ENCODE measurements at regions of chr10 and their contacts with region 1.

Region 1: GRCh38 chr10:111885046-111885445 is 298.5 kb downstream of the GPAM start:
- DNase-seq: no peak
- H3K4me3 ChIP-seq: no peak overlapping the region
- H3K27ac ChIP-seq: no peak overlapping the region
- H3K4me1 ChIP-seq: no peaks in the 10 kb centered on the region
- H3K27me3 ChIP-seq: no peaks in the 10 kb centered on the region
- CTCF ChIP-seq: no peak
- EP300 ChIP-seq: no peak
- POLR2A ChIP-seq: no peak

Region 2: DNA sequence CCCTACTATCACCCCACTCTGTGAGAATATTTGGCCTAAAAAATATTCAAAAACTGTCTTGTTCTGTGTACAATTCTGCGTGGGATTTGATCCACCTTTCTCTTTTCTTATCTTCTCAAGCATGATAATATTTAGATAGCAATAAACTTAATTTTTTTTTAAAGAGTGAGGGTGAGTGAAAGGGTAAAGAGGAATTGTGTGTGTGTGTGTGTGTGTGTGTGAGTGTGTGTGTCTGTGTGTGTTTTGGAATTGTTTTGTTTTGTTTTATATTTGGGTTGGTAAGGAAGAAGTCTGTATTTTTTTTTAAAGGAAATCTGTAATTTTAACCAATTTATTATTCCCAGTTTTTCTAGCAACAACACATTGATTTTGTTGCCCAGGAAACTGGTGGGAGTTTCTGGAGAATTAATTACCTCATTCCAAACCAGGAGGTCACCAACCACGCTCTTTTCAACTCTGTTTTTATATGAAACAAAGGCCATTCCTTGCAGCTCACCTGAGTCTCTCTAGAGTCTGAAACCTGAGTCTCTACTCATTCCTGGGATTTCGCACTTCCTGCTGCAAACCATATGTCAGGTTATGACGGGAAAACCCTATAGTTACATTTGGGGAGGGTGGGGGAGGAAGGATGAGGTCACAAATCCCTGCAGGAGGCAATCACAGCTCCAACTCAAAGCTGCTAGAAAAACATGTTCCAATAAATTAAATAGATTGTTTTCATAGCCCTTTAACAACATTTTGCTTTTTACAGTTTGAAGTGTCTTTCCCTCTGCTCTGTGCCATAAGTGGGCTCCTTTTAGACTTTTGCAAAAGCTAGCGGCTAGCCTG is 1923.7 kb before region 1 on chr10:
- intact Hi-C with region 1: loop called in 1 of 4 experiments (anchors 5 kb)
- DNase-seq: no peak
- H3K4me3 ChIP-seq: no peak overlapping the region
- H3K27ac ChIP-seq: no peak overlapping the region
- H3K4me1 ChIP-seq: peaks cover 2% of the 10 kb centered on the region
- H3K27me3 ChIP-seq: no peaks in the 10 kb centered on the region
- CTCF ChIP-seq: no peak
- EP300 ChIP-seq: no peak
- POLR2A ChIP-seq: no peak